T-cell (primary cell): ENCODE measurements at regions of chr14 and their contacts with region 1.

Region 1: DNA sequence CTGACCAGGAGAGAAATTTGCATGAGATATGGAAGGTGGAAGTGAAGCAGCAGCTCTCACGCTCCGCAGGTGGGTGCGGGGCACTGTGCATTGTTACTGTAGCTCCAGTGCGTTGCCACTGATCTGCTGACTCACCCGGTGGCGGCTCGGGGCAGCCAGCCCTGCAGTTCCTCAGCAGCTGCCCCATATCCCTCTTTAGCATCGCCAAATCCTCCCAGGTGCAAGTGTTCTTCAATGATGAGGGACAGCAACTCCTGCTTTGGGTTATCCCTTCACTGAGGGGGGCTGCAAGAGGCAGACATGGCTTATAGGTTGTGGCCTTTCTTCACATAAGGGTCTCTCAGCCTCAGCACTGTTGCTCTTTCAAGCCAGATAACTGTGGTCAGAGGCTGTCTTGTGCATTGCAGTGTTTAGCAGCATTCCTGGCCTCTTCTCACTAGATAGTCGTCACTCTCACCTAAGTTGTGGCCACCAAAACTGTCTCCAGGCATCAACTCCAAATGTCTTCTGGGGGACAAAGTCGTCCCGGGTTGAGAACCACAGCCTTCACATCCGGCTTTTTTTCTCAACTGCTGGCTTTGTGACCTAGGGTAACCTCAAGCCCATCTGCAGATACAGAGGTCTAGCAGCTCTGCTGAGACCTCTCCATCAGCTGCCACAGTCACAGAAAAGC is 180.8 kb downstream of the EFCAB11 start:
- DNase-seq: peak; percentile 20 to 76 (median 54)
- ATAC-seq: peak; percentile 90 to 94 (median 92)
- H3K4me3 ChIP-seq: peak overlapping the region; percentile 2 to 35
- H3K4me3 Mint-ChIP-seq: peak overlapping the region; percentile 52 to 68 (median 53)
- H3K27ac ChIP-seq: no peak overlapping the region
- H3K27ac Mint-ChIP-seq: peak overlapping the region in 1 of 2 donors; percentile 35
- H3K4me1 ChIP-seq: peaks cover 7 to 25% of the 10 kb centered on the region in 2 experiments
- H3K4me1 Mint-ChIP-seq: peaks cover 18 to 28% (median 18%) of the 10 kb centered on the region in 3 donors
- H3K27me3 ChIP-seq: no peaks in the 10 kb centered on the region
- H3K27me3 Mint-ChIP-seq: no peaks in the 10 kb centered on the region

Region 2: DNA sequence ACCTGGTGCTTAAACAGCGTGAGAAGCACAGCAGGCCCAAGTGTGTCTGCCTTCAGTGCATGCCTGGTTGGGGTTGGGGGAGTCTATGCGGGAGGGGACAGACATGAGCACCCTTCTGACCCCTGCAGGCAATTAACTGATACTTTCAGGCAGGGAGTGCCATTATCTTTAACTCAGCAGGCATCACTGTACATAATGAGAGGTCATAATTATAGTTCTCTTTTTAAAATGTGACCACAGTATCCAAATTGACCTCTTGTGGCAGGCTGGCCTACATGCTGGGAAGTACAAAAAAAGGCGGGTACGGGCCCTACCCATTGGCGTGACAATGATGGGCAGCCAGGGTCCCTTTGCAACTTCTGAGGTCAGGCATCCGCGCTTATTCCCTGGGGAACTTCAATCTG is 565.9 kb before region 1 on chr14:
- CTCF ChIA-PET with region 1: no interaction called
- POLR2A ChIA-PET with region 1: interaction called in 1 of 2 experiments, 10 read pairs
- DNase-seq: no peak
- ATAC-seq: no peak
- H3K4me3 ChIP-seq: no peak overlapping the region
- H3K4me3 Mint-ChIP-seq: no peak overlapping the region
- H3K27ac ChIP-seq: no peak overlapping the region
- H3K27ac Mint-ChIP-seq: no peak overlapping the region
- H3K4me1 ChIP-seq: peaks cover 1 to 20% of the 10 kb centered on the region in 2 experiments
- H3K4me1 Mint-ChIP-seq: peaks cover 45 to 69% (median 64%) of the 10 kb centered on the region in 3 donors
- H3K27me3 ChIP-seq: no peaks in the 10 kb centered on the region
- H3K27me3 Mint-ChIP-seq: no peaks in the 10 kb centered on the region